Activated CD8-positive, alpha-beta T cell treated with anti-CD3 and anti-CD28 coated beads for 36 hours (primary cell): ENCODE measurements at regions of chr2 and their contacts with region 1.

Region 1: DNA sequence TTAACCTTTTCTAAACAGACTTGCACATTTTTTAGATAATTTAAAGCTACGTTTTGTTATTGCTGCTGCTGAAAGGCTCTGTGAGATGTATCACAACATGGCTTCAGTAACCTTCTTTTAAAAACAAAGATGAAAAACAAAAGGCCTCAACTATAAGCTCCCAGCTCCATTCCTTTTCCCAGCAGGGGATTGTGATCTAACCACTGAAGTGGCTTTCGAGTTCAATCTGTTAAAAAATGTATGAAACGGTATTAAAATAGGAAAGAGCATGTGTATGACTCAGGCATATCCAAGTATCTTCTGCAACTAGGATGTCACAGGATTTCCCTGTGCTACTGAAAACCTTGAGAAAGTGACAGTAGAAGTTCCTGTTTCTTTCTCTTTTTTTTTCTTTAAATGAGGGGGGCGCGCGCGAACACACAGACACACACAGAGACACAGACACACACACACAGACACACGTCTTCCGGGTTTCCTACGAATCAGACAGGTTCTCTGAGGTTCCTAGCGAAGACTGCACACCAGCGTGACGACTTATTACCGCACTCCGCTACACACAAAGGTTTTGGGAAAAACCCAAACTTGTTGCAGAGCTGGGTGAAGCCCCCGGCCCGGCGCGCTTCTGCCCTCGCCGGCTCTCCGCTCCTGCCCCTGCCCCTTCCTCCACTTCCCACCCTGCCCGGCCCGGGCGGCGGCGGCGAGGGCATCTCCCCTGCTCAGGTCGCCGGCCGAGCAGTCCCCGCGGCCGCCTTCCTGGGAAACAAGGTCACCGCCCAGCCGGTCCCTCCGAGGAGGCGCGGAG is 86.8 kb downstream of the RBMS1 start:
- DNase-seq: peak; percentile 87
- ATAC-seq: peak; percentile 70
- H3K4me3 Mint-ChIP-seq: peak overlapping the region; percentile 95
- H3K27ac Mint-ChIP-seq: peak overlapping the region; percentile 92
- H3K4me1 Mint-ChIP-seq: peaks cover 71% of the 10 kb centered on the region
- H3K27me3 Mint-ChIP-seq: no peaks in the 10 kb centered on the region
- CTCF ChIP-seq: no peak

Region 2: GRCh38 chr2:160324161-160324800 is 82.5 kb before region 1 on chr2:
- CTCF ChIA-PET with region 1: interaction called, 15 read pairs
- POLR2A ChIA-PET with region 1: interaction called, 3 read pairs
- intact Hi-C with region 1: no loop called
- DNase-seq: peak; percentile 74
- ATAC-seq: no peak
- H3K4me3 Mint-ChIP-seq: no peak overlapping the region
- H3K27ac Mint-ChIP-seq: no peak overlapping the region
- H3K4me1 Mint-ChIP-seq: peaks cover 81% of the 10 kb centered on the region
- H3K27me3 Mint-ChIP-seq: no peaks in the 10 kb centered on the region
- CTCF ChIP-seq: peak; percentile 77

Region 3: DNA sequence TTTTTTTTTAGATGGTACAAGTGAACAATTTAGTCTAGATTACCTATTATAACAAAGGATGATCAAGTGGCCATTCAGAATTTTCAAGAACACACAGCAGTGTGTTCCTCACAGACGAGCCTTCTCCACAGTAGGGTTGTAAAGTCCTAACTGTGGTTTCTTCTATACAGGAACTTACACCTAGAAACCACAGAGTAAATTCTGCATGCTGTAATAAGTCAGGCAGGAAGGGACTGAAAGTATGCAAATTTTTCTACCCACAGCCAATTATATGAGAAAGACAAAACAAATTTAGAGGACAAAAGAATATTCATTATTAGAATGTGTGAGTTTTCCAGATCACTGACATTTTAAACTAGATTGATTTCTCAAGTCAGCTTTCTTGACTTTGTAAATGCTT is 12.6 kb before region 1 on chr2:
- CTCF ChIA-PET with region 1: interaction called, 24 read pairs
- POLR2A ChIA-PET with region 1: interaction called, 9 read pairs
- intact Hi-C with region 1: no loop called
- DNase-seq: no peak
- ATAC-seq: peak; percentile 89
- H3K4me3 Mint-ChIP-seq: peak overlapping the region; percentile 53
- H3K27ac Mint-ChIP-seq: peak overlapping the region; percentile 92
- H3K4me1 Mint-ChIP-seq: peaks cover 57% of the 10 kb centered on the region
- H3K27me3 Mint-ChIP-seq: no peaks in the 10 kb centered on the region
- CTCF ChIP-seq: no peak

Region 4: DNA sequence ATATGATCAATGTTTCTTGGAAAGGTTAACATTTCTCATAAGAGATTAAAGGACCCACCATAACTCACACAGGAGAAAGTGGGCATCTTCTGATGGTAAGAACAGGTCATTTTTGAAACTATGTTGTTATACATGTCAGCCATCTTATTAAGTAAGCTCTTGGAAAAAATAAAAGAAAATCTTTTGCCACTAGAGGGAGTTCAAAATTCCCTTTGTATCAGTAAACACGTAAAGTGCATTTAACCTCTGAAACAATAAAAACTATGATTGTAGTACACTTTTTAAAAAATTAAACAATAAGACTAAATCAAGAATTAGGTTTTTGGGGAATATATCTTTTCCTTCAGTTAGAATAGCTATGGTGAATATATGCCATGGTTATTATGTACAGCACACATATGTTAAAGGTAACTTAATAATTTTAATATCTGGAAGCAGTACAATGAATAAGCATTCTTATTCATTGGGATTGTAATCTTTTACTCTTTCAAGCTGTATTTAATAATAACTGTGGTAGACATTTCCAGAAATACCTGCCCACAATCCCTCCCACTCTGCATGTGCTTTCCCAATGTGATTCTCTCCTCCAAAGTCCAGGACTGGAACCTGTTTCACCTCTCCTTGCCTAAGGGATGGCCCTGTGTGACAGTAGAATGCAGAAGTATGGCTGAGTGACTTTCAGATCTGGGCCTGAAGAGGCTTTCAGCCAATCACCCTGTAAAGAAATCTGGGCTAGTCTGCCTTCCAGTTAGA is 22.6 kb after region 1 on chr2:
- CTCF ChIA-PET with region 1: interaction called, 13 read pairs
- POLR2A ChIA-PET with region 1: interaction called, 7 read pairs
- intact Hi-C with region 1: loop called (anchors 2 kb)
- DNase-seq: no peak
- ATAC-seq: peak; percentile 63
- H3K4me3 Mint-ChIP-seq: peak overlapping the region; percentile 15
- H3K27ac Mint-ChIP-seq: peak overlapping the region; percentile 92
- H3K4me1 Mint-ChIP-seq: peaks cover 66% of the 10 kb centered on the region
- H3K27me3 Mint-ChIP-seq: no peaks in the 10 kb centered on the region
- CTCF ChIP-seq: peak; percentile 67

Region 5: DNA sequence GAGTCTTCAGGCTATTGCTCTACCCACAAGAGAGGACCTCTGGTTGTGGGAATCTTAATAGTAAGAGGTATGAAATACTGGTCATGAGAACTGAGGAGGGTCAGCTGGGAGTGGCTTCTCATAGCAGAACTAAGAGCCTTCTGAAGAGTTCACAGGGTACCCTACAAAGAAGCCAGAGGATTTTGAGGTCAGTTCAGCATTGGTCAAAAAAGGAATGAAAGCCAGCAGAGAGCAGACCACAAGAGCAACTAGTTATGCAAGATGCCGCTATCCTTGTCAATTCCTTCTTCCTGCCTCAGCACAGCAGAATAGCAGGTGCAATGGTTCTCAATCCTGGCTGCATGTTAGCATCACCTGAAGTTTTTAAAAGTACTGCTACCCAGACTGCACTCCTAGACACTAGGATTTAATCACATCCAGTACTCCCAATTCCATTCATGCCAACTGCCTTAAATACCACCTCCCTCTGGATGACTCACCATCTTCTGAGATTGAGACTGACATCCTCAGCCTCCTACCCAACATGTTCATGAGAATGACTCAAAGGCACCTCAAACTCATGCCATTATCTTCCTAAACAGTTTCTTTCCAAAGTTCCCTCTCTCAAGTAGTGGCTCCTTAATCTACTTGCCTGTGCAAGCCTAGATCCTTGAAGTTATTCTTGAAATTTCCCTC is 167.8 kb after region 1 on chr2:
- CTCF ChIA-PET with region 1: no interaction called
- POLR2A ChIA-PET with region 1: no interaction called
- intact Hi-C with region 1: no loop called
- DNase-seq: no peak
- ATAC-seq: no peak
- H3K4me3 Mint-ChIP-seq: no peak overlapping the region
- H3K27ac Mint-ChIP-seq: no peak overlapping the region
- H3K4me1 Mint-ChIP-seq: no peaks in the 10 kb centered on the region
- H3K27me3 Mint-ChIP-seq: no peaks in the 10 kb centered on the region
- CTCF ChIP-seq: no peak

Region 6: DNA sequence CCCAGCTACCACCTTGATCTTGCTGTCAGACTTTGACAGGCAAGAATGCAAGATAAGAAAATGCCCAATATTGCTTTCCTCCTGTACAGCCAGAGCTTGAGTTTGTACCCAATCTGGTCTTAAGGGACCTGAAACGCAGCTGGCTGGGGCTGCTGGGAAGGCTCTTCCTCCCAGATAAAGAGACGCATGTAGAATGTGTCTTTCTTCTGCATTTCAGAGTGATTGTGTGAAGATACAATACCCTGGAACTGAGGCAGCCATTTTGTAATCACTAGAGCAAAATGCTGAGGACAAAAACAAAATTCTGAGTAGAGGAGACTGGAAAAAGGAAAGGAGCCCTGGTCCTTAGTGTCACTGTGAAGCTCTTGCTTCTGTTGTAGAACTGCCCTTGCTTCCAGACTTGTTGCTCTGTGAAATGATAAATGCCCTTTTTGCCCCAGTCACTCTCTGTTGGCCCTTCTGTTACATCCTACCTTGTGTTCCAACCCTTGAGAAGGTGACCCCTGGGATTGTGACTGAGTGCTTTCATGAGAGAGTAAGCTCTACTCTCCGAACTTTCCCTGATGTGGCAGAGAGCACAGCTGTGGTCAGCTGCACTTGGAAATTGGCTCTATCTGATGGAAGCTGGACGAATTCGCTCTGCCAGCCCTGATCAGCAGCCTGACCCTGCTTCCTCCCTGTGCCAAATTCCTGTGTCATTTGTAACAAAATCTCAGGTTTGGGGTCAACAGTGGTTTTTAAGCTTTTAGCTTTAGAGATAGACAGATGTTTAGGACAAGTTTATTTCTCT is 224.2 kb after region 1 on chr2:
- CTCF ChIA-PET with region 1: no interaction called
- POLR2A ChIA-PET with region 1: no interaction called
- intact Hi-C with region 1: no loop called
- DNase-seq: no peak
- ATAC-seq: no peak
- H3K4me3 Mint-ChIP-seq: no peak overlapping the region
- H3K27ac Mint-ChIP-seq: no peak overlapping the region
- H3K4me1 Mint-ChIP-seq: no peaks in the 10 kb centered on the region
- H3K27me3 Mint-ChIP-seq: no peaks in the 10 kb centered on the region
- CTCF ChIP-seq: no peak